ENCODE measurements at regions of chr6 and their contacts with region 1.

Region 1: DNA sequence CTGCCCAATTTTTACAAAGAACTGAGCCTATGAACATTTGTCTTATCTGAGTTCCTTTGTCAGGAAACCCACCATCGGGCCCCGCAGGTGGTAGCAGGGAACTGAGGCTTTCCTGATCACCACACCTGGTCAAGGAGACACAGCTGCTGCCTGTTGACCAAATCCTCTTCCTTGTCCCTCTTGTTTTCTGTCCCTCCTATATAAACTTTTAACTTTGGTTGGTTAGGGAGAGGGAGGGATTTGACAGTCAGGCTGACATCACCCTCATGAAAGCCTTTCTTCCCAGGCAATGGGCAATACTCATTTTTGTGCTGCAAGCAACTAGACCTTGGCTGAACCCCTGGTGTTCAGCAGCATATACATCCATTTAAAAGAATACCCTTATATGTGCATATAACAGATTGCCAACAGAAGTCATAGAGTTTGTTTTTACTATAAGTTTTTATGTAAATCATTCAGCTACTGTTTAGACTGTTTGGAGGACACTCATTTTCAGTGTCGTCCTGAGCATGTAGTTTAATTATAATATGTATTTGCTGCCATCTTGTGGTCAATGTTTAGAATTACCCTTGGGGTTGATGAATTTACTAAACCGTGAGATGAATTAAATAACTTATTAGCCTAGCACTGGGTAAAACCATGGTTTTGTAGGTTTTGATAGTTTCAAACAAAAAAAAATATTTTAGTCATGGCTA is 17.0 kb downstream of the CRISP1 start:
- DNase-seq: no peak
- ATAC-seq: peak in 2 of 8 donors; percentile 50 to 53
- H3K4me3 ChIP-seq: no peak overlapping the region
- H3K27ac ChIP-seq: no peak overlapping the region
- H3K4me1 ChIP-seq: no peaks in the 10 kb centered on the region
- H3K27me3 ChIP-seq: peaks cover 0 to 19% (median 3%) of the 10 kb centered on the region in 7 donors
- CTCF ChIP-seq: peak; percentile 38 to 78 (median 67)

Region 2: DNA sequence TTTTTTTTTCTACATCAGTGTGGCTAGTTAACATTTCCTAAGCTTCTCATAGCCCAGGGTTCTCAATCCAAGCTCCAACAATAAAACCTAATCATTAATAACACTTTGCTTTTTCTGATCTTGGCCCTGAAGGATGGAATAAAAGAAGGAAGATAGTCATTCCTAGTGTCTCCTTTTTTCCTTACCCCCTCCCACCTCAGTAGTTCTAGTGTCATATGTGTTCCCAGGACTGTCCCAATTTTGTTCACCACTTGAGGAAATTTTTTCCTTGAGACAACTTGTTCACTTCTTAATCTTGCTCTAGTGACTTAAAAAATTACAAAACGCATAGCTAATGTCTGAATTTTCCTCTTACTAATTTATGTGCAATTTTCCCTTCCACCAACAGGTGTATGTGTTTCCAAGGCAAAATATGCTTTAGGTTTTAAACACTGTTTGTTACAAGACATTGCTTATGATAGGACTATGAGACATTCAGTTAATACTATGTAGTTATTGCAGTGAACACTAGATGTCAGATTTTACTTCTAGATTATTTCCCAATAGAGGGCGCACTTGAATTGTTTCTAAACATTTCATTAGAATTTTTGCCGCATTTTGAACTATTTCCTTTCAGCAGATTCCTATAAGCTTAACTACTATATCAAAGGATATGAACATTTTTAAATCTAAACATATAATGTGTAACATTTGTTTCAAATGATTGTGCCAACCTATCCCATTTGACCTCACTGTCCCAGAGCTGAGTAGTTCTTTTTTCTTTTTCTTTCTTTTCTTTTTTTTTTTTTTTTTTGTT is 317.4 kb before region 1 on chr6:
- intact Hi-C with region 1: loop called (anchors 2 to 10 kb)
- DNase-seq: no peak
- ATAC-seq: peak in 5 of 8 donors; percentile 23 to 67 (median 47)
- H3K4me3 ChIP-seq: peak overlapping the region in 3 of 10 donors; percentile 21 to 27 (median 27)
- H3K27ac ChIP-seq: no peak overlapping the region
- H3K4me1 ChIP-seq: no peaks in the 10 kb centered on the region
- H3K27me3 ChIP-seq: peaks cover 0 to 10% (median 0%) of the 10 kb centered on the region in 7 donors
- CTCF ChIP-seq: peak; percentile 42 to 94 (median 78)

Region 3: DNA sequence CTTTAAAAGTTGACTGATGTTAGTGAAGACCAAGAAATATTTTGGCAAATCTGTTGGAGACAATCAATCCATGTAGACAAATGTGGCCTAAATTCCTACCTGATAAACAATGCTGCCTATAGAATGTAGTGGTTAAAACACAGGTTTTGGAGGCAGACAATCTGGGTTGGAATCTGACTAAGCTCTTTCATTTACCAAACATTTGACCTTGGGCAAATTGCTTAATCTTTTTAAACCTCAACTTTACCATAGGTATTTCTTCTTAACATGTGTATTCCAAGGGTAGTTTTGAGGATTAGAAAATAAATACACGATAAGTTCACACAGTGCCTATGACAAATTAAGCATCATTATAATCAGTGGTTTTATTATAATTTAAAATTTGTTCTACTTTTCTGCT is 224.2 kb before region 1 on chr6:
- intact Hi-C with region 1: loop called in 8 of 10 experiments (anchors 2 to 10 kb)
- DNase-seq: no peak
- ATAC-seq: no peak
- H3K4me3 ChIP-seq: no peak overlapping the region
- H3K27ac ChIP-seq: no peak overlapping the region
- H3K4me1 ChIP-seq: no peaks in the 10 kb centered on the region
- H3K27me3 ChIP-seq: peaks cover 0 to 5% (median 0%) of the 10 kb centered on the region in 7 donors
- CTCF ChIP-seq: no peak

Measured in heart right ventricle (tissue), 16 donors.